ENCODE measurements at regions of chr7 and their contacts with region 1.

Region 1: GRCh38 chr7:139359366-139360209 is at the start of gene LUC7L2:
- DNase-seq: peak; percentile 100
- H3K4me3 Mint-ChIP-seq: peak within 1 kb of the TSS; percentile 97
- H3K27ac Mint-ChIP-seq: peak within 1 kb of the TSS; percentile 100
- H3K4me1 Mint-ChIP-seq: peaks cover 28% of the 10 kb centered on the region
- H3K27me3 Mint-ChIP-seq: no peaks in the 10 kb centered on the region
- total RNA-seq, gene LUC7L2: 164 and 172 TPM in 2 replicates

Region 2: GRCh38 chr7:138459413-138460175 is 900.0 kb before region 1 on chr7:
- intact Hi-C with region 1: loop called (anchors 5 kb)
- DNase-seq: peak; percentile 99
- H3K4me3 Mint-ChIP-seq: peak overlapping the region; percentile 78
- H3K27ac Mint-ChIP-seq: peak overlapping the region; percentile 47
- H3K4me1 Mint-ChIP-seq: peaks cover 17% of the 10 kb centered on the region
- H3K27me3 Mint-ChIP-seq: peaks cover 2% of the 10 kb centered on the region

Region 3: GRCh38 chr7:139109188-139109982 is 250.2 kb before region 1 on chr7 and contains the start of gene ZC3HAV1:
- intact Hi-C with region 1: loop called (anchors 2 kb)
- DNase-seq: peak; percentile 97
- H3K4me3 Mint-ChIP-seq: peak within 1 kb of the TSS; percentile 97
- H3K27ac Mint-ChIP-seq: peak within 1 kb of the TSS; percentile 92
- H3K4me1 Mint-ChIP-seq: peaks cover 24% of the 10 kb centered on the region
- H3K27me3 Mint-ChIP-seq: no peaks in the 10 kb centered on the region
- total RNA-seq, gene ZC3HAV1: 86.1 and 90.5 TPM in 2 replicates

Region 4: GRCh38 chr7:139340037-139340807 is 19.4 kb before region 1 on chr7:
- intact Hi-C with region 1: loop called (anchors 1 kb)
- DNase-seq: peak; percentile 99
- H3K4me3 Mint-ChIP-seq: peak overlapping the region; percentile 91
- H3K27ac Mint-ChIP-seq: peak overlapping the region; percentile 93
- H3K4me1 Mint-ChIP-seq: peaks cover 19% of the 10 kb centered on the region
- H3K27me3 Mint-ChIP-seq: peaks cover 4% of the 10 kb centered on the region

Region 5: GRCh38 chr7:140165422-140165821 is 805.8 kb after region 1 on chr7:
- intact Hi-C with region 1: no loop called
- DNase-seq: no peak
- H3K4me3 Mint-ChIP-seq: peak overlapping the region; percentile 58
- H3K27ac Mint-ChIP-seq: peak overlapping the region; percentile 71
- H3K4me1 Mint-ChIP-seq: peaks cover 52% of the 10 kb centered on the region
- H3K27me3 Mint-ChIP-seq: no peaks in the 10 kb centered on the region

Region 6: GRCh38 chr7:140230861-140231770 is 871.5 kb after region 1 on chr7:
- intact Hi-C with region 1: loop called (anchors 5 kb)
- DNase-seq: peak; percentile 86
- H3K4me3 Mint-ChIP-seq: peak overlapping the region; percentile 96
- H3K27ac Mint-ChIP-seq: peak overlapping the region; percentile 98
- H3K4me1 Mint-ChIP-seq: peaks cover 33% of the 10 kb centered on the region
- H3K27me3 Mint-ChIP-seq: no peaks in the 10 kb centered on the region

Measured in activated CD4-positive, alpha-beta T cell treated with anti-CD3 and anti-CD28 coated beads, Interleukin-2, amount 10 ng/mL, durations not matched to agents 24 days and 14 days (primary cell).